Activated CD8-positive, alpha-beta T cell treated with anti-CD3 and anti-CD28 coated beads, Interleukin-2, amount 10 ng/mL, durations not matched to agents 7 days and 5 days (primary cell): ENCODE measurements at regions of chr6 and their contacts with region 1.

Region 1: DNA sequence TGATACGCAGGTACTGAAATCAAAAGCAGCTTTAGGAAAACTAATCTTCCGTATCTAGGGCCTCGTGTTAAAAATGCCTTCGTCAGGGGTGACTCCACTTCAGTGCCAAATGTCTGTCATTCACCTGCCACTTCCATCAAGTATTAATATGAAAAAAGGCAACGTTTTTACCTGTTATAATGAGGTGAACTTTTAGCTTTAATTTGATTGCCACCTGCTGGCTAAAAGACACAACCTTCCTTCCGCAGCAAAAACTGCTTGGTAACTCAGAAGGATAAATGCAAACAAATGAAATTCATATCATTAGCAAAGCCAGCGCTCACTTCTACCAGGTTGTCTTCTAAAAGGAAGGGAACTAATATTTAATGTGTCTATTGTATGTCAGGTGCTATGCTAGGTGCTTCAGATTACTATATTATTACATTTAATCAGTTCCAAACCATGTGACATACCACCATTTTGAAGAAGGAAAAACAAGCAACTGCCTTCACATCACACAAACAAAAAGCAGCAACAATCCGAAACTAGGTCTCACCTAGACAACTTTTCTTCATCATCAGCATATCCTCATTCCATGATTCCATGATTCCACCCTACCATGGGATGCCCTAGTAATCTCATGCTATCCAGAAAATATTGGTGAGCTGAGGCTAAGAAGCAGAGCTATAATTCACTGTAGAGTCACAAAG is 20.6 kb upstream of the ARHGAP18 start:
- DNase-seq: peak; percentile 55
- ATAC-seq: peak; percentile 51
- H3K4me3 Mint-ChIP-seq: no peak overlapping the region
- H3K27ac Mint-ChIP-seq: no peak overlapping the region
- H3K4me1 Mint-ChIP-seq: peaks cover 12% of the 10 kb centered on the region
- H3K27me3 Mint-ChIP-seq: no peaks in the 10 kb centered on the region

Region 2: GRCh38 chr6:129543981-129544380 is 186.6 kb before region 1 on chr6:
- CTCF ChIA-PET with region 1: no interaction called
- POLR2A ChIA-PET with region 1: no interaction called
- DNase-seq: no peak
- ATAC-seq: no peak
- H3K4me3 Mint-ChIP-seq: no peak overlapping the region
- H3K27ac Mint-ChIP-seq: no peak overlapping the region
- H3K4me1 Mint-ChIP-seq: no peaks in the 10 kb centered on the region
- H3K27me3 Mint-ChIP-seq: peaks cover 2% of the 10 kb centered on the region

Region 3: DNA sequence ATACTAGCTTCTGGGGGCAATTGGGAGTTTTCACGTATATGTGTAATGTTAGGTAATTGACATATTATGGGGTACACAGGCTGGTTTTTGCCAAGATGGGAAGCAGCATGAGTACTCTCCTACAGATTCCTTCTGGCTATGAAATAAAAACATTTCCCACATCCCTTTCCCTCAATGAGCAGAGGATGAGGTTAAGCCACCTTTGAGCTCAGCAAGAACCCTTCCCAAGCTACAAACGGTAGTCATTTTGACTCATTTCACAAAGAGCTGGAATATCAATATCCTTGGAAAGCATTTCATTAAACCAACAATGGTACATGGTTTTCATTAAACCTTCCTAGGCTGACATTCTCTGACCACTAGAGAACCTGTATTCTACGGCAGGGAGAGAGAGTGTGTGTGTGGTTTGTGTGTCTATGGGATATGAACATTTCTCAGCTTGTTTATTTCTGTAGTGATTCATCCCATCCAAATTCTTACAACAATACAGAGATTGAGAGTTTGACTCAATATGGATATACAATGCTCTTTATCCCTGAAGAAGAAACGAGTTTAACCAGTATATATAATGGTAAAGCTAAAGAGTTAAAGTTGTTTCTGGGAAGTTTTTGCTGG is 140.1 kb before region 1 on chr6:
- CTCF ChIA-PET with region 1: interaction called, 11 read pairs
- POLR2A ChIA-PET with region 1: no interaction called
- DNase-seq: no peak
- ATAC-seq: no peak
- H3K4me3 Mint-ChIP-seq: no peak overlapping the region
- H3K27ac Mint-ChIP-seq: no peak overlapping the region
- H3K4me1 Mint-ChIP-seq: no peaks in the 10 kb centered on the region
- H3K27me3 Mint-ChIP-seq: no peaks in the 10 kb centered on the region

Region 4: DNA sequence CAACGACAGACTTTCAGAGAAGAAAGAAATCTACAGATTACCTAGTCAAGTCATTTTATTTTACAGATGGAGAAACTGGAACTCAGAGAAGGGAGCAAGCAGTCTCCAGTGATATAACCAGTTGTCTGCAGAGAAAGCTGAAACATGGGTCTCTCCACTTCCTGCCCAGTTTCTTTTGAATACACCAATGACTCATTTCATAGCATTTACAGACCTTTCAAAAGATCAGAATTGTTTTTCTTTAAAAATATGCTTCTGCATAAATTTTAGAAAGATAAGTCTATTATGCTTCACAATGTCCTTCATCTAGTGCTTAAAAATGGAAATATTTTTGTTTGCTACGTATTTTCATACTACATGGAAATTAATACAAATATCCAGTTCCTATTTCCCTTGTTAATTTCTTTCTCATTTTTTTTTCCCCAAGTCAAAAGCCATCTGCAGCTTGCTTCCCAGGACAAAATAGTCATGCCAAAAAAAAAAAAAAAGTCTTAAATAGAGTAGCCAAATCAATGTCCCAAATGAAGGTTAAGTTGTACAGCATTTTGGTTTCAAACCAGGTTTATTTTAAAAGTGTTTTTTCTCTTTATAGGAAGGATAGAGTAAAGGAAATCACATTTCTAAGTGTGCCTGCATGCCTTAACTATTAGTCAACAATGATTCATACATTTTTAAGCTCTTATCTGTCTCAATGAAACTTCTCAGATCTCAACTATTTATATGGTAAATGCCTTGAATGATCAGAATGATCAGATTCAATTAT is 57.6 kb before region 1 on chr6:
- CTCF ChIA-PET with region 1: interaction called, 63 read pairs
- POLR2A ChIA-PET with region 1: interaction called, 4 read pairs
- DNase-seq: peak; percentile 53
- ATAC-seq: peak; percentile 71
- H3K4me3 Mint-ChIP-seq: peak overlapping the region; percentile 68
- H3K27ac Mint-ChIP-seq: peak overlapping the region; percentile 97
- H3K4me1 Mint-ChIP-seq: peaks cover 47% of the 10 kb centered on the region
- H3K27me3 Mint-ChIP-seq: no peaks in the 10 kb centered on the region

Region 5: DNA sequence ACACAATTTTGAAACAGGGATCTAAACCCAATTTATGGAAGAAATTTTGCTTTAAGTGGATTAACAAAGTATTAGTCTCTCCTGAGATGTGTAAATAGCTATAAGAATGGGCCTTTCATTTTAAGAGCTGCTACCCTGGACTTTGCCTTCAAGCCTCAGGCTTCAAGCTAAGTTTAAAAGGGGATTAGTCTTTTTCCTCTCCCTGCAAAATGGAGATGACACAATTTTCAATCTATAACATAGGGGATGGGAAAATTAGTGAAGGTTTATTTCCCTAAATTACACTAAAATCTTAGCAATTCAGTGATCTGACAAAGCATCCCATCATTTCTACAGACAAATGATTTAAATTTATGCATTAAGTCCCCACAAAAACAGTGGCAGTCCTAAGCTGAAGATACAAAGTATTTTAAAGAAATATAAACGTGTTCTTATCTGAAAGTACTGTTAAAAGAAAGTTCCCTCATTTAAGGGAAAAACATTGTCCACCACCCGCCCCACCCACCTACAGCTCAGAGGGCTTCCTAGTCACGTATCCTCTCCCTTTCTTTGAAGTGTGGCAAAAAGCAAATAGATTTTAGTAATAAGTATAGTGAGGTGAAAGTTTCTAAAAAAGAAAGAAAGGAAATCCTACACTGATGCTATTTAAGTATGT is 35.1 kb before region 1 on chr6:
- CTCF ChIA-PET with region 1: interaction called, 12 read pairs
- POLR2A ChIA-PET with region 1: no interaction called
- DNase-seq: peak; percentile 36
- ATAC-seq: peak; percentile 87
- H3K4me3 Mint-ChIP-seq: peak overlapping the region; percentile 47
- H3K27ac Mint-ChIP-seq: peak overlapping the region; percentile 76
- H3K4me1 Mint-ChIP-seq: peaks cover 66% of the 10 kb centered on the region
- H3K27me3 Mint-ChIP-seq: no peaks in the 10 kb centered on the region

Region 6: GRCh38 chr6:129748212-129748900 is 17.7 kb after region 1 on chr6:
- CTCF ChIA-PET with region 1: interaction called, 44 read pairs
- POLR2A ChIA-PET with region 1: no interaction called
- DNase-seq: peak; percentile 77
- ATAC-seq: peak; percentile 94
- H3K4me3 Mint-ChIP-seq: peak overlapping the region; percentile 60
- H3K27ac Mint-ChIP-seq: peak overlapping the region; percentile 91
- H3K4me1 Mint-ChIP-seq: peaks cover 57% of the 10 kb centered on the region
- H3K27me3 Mint-ChIP-seq: no peaks in the 10 kb centered on the region